Stomach (tissue), 19 donors: ENCODE measurements at regions of chr21 and their contacts with region 1.

Region 1: DNA sequence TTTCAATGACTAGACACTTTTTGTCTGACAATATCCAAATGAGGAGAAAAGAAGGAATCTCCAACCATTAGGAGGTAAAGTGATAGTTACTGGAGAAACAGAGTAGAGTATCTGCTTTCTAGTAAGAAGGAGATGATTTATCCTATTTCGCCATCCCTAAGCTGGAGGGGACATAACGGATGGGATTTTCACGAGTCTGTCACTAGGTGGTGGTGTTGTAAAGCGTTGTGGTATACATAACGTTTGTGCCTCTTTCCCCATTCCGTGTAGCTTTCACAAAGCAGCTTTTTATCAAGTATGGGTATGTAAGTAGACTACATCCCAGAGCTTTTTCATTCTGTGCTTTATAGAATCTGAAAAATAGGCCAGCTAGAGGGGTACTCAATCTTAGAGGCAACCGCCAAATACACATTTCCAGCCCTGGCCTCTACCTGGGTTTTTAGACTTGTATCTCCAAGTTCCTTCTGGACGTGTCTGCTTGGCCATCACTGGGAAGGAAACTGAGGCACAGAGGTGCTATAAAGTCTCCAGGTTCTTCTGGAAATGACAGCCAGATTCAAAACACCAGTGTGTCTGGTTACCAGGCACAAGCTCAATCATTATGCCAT is 33.3 kb upstream of the FAM3B start:
- DNase-seq: peak; percentile 49 to 93
- H3K4me3 ChIP-seq: no peak overlapping the region
- H3K27ac ChIP-seq: no peak overlapping the region
- H3K4me1 ChIP-seq: peaks cover 0 to 10% (median 2%) of the 10 kb centered on the region in 4 donors
- H3K27me3 ChIP-seq: no peaks in the 10 kb centered on the region
- CTCF ChIP-seq: peak in 5 of 7 experiments; percentile 51 to 85 (median 75)
- EP300 ChIP-seq: no peak
- POLR2A ChIP-seq: no peak

Region 2: DNA sequence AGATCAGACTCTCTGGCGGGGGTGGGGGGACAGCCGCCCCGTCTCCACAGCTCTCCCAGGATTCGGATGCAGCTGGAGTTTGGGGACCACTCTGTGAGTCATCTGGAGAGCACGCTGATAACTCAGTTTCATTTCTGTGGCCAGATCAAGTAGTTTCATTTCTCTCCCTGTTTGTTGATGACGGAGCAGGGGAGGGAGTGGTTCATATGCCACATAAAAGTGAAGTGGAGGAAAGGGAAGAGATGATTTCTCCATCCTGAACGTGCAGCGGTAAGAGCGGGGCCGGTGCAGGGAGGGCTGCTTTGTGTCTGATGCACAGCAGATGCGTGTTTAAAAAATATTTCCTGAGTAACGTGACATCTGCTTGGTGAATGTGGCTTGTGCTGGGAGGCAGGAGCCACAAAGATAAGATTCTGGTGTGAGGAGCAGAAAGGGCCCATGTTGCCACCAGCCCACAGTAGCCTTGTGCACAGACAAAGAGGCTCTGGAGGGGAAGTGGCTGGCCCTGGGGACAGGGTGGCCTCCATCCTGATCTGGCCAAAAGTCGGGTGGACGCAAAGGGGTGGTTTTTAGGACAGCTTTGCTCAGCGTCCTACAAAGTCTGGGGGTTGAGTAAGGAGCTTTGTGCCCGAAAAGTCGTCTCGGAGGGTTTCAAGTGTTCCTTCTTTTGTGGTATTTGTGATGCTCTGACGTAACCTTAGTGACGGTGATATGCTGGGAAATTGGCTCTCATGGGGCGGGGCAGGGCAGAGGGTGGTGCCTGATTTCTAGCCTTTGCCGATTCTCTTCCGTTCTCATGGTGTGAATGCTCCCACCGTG is 78.7 kb after region 1 on chr21 and contains the start of gene MX2:
- intact Hi-C with region 1: loop called (anchors 10 kb)
- DNase-seq: peak; percentile 66 to 92
- H3K4me3 ChIP-seq: peak within 1 kb of the TSS; percentile 29 to 43 (median 32)
- H3K27ac ChIP-seq: peak within 1 kb of the TSS; percentile 78 to 92 (median 84)
- H3K4me1 ChIP-seq: peaks cover 13 to 70% (median 36%) of the 10 kb centered on the region in 4 donors
- H3K27me3 ChIP-seq: no peaks in the 10 kb centered on the region
- CTCF ChIP-seq: no peak
- EP300 ChIP-seq: no peak
- POLR2A ChIP-seq: peak in 1 of 4 donors; percentile 4
- total RNA-seq, gene MX2: 8.7 to 85.8 (median 51.6) TPM

Region 3: GRCh38 chr21:41459884-41460534 is 176.7 kb after region 1 on chr21:
- intact Hi-C with region 1: loop called (anchors 5 kb)
- DNase-seq: no peak
- H3K4me3 ChIP-seq: no peak overlapping the region
- H3K27ac ChIP-seq: no peak overlapping the region
- H3K4me1 ChIP-seq: peaks cover 0 to 26% (median 15%) of the 10 kb centered on the region in 4 donors
- H3K27me3 ChIP-seq: no peaks in the 10 kb centered on the region
- CTCF ChIP-seq: no peak
- EP300 ChIP-seq: no peak
- POLR2A ChIP-seq: no peak